CD4-positive, alpha-beta T cell (primary cell): ENCODE measurements at regions of chr10 and their contacts with region 1.

Region 1: GRCh38 chr10:35195361-35196306 is 69.0 kb downstream of the CREM start:
- DNase-seq: peak; percentile 30 to 98 (median 70)
- ATAC-seq: peak; percentile 80
- H3K4me3 ChIP-seq: peak overlapping the region; percentile 52
- H3K4me3 Mint-ChIP-seq: peak overlapping the region; percentile 88
- H3K27ac ChIP-seq: peak overlapping the region; percentile 93 to 97
- H3K27ac Mint-ChIP-seq: peak overlapping the region; percentile 96
- H3K4me1 ChIP-seq: peaks cover 14% of the 10 kb centered on the region
- H3K4me1 Mint-ChIP-seq: peaks cover 30% of the 10 kb centered on the region
- H3K27me3 ChIP-seq: no peaks in the 10 kb centered on the region
- H3K27me3 Mint-ChIP-seq: no peaks in the 10 kb centered on the region
- CTCF ChIP-seq: peak; percentile 94

Region 2: GRCh38 chr10:35119378-35119777 is 76.3 kb before region 1 on chr10:
- CTCF ChIA-PET with region 1: interaction called, 102 read pairs
- POLR2A ChIA-PET with region 1: interaction called, 10 read pairs
- intact Hi-C with region 1: no loop called
- DNase-seq: no peak
- ATAC-seq: no peak
- H3K4me3 ChIP-seq: no peak overlapping the region
- H3K4me3 Mint-ChIP-seq: no peak overlapping the region
- H3K27ac ChIP-seq: no peak overlapping the region
- H3K27ac Mint-ChIP-seq: no peak overlapping the region
- H3K4me1 ChIP-seq: no peaks in the 10 kb centered on the region
- H3K4me1 Mint-ChIP-seq: no peaks in the 10 kb centered on the region
- H3K27me3 ChIP-seq: no peaks in the 10 kb centered on the region
- H3K27me3 Mint-ChIP-seq: no peaks in the 10 kb centered on the region
- CTCF ChIP-seq: no peak

Region 3: GRCh38 chr10:35136263-35136815 is 59.3 kb before region 1 on chr10:
- CTCF ChIA-PET with region 1: interaction called, 10 read pairs
- POLR2A ChIA-PET with region 1: interaction called, 17 read pairs
- intact Hi-C with region 1: no loop called
- DNase-seq: peak in 2 of 14 experiments; percentile 29 to 30
- ATAC-seq: no peak
- H3K4me3 ChIP-seq: no peak overlapping the region
- H3K4me3 Mint-ChIP-seq: peak overlapping the region; percentile 48
- H3K27ac ChIP-seq: peak overlapping the region in 1 of 2 donors; percentile 64
- H3K27ac Mint-ChIP-seq: peak overlapping the region; percentile 64
- H3K4me1 ChIP-seq: peaks cover 23% of the 10 kb centered on the region
- H3K4me1 Mint-ChIP-seq: peaks cover 40% of the 10 kb centered on the region
- H3K27me3 ChIP-seq: no peaks in the 10 kb centered on the region
- H3K27me3 Mint-ChIP-seq: no peaks in the 10 kb centered on the region
- CTCF ChIP-seq: no peak

Region 4: GRCh38 chr10:35184527-35185171 is 11.0 kb before region 1 on chr10:
- CTCF ChIA-PET with region 1: interaction called, 7 read pairs
- POLR2A ChIA-PET with region 1: interaction called, 10 read pairs
- intact Hi-C with region 1: no loop called
- DNase-seq: no peak
- ATAC-seq: no peak
- H3K4me3 ChIP-seq: no peak overlapping the region
- H3K4me3 Mint-ChIP-seq: no peak overlapping the region
- H3K27ac ChIP-seq: no peak overlapping the region
- H3K27ac Mint-ChIP-seq: peak overlapping the region; percentile 33
- H3K4me1 ChIP-seq: no peaks in the 10 kb centered on the region
- H3K4me1 Mint-ChIP-seq: no peaks in the 10 kb centered on the region
- H3K27me3 ChIP-seq: no peaks in the 10 kb centered on the region
- H3K27me3 Mint-ChIP-seq: no peaks in the 10 kb centered on the region
- CTCF ChIP-seq: no peak

Region 5: GRCh38 chr10:35336084-35336831 is 140.6 kb after region 1 on chr10 and contains the start of gene CCNY:
- CTCF ChIA-PET with region 1: interaction called, 3 read pairs
- POLR2A ChIA-PET with region 1: interaction called, 7 read pairs
- intact Hi-C with region 1: loop called (anchors 5 kb)
- DNase-seq: peak; percentile 62 to 87 (median 75)
- ATAC-seq: peak; percentile 85
- H3K4me3 ChIP-seq: peak within 1 kb of the TSS; percentile 80
- H3K4me3 Mint-ChIP-seq: peak within 1 kb of the TSS; percentile 93
- H3K27ac ChIP-seq: peak within 1 kb of the TSS; percentile 41 to 54
- H3K27ac Mint-ChIP-seq: peak within 1 kb of the TSS; percentile 87
- H3K4me1 ChIP-seq: peaks cover 44% of the 10 kb centered on the region
- H3K4me1 Mint-ChIP-seq: peaks cover 79% of the 10 kb centered on the region
- H3K27me3 ChIP-seq: no peaks in the 10 kb centered on the region
- H3K27me3 Mint-ChIP-seq: no peaks in the 10 kb centered on the region
- CTCF ChIP-seq: no peak
- total RNA-seq, gene CCNY: 64.9 to 66.9 TPM